Dendritic cell treated with granulocyte-macrophage colony-stimulating factor and Interleukin-4, amounts not matched to agents 40 ng/mL and 50 ng/mL, for 4 days (primary cell): ENCODE measurements at regions of chr3 and their contacts with region 1.

Region 1: GRCh38 chr3:115092220-115092791 is 54.8 kb downstream of the ZBTB20 start:
- H3K4me3 Mint-ChIP-seq: no peak overlapping the region
- H3K27ac Mint-ChIP-seq: no peak overlapping the region
- H3K4me1 Mint-ChIP-seq: peaks cover 2% of the 10 kb centered on the region
- H3K27me3 Mint-ChIP-seq: no peaks in the 10 kb centered on the region

Region 2: DNA sequence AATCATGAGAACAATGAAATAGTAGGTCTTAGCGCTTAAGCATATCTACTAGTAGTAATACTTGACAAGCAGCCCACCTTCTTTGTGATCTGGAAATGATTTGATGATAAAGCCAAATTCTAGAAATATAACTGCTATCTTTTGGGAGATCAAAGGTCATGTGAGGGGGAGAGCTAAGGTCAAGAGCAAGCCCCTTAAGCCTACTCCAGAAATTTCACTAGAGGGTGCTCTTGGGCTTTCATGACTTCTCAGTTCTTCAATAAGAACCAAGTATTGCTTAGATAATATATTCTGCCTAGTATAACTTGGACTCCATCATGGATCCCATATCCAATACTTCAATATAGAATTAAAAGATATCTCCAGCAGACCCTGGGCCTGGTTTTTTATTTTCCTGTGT is 264.8 kb before region 1 on chr3:
- intact Hi-C with region 1: loop called (anchors 2 kb)
- H3K4me3 Mint-ChIP-seq: no peak overlapping the region
- H3K27ac Mint-ChIP-seq: no peak overlapping the region
- H3K4me1 Mint-ChIP-seq: no peaks in the 10 kb centered on the region
- H3K27me3 Mint-ChIP-seq: no peaks in the 10 kb centered on the region

Region 3: GRCh38 chr3:115052906-115053305 is 39.4 kb before region 1 on chr3:
- intact Hi-C with region 1: no loop called
- H3K4me3 Mint-ChIP-seq: no peak overlapping the region
- H3K27ac Mint-ChIP-seq: no peak overlapping the region
- H3K4me1 Mint-ChIP-seq: no peaks in the 10 kb centered on the region
- H3K27me3 Mint-ChIP-seq: no peaks in the 10 kb centered on the region

Region 4: DNA sequence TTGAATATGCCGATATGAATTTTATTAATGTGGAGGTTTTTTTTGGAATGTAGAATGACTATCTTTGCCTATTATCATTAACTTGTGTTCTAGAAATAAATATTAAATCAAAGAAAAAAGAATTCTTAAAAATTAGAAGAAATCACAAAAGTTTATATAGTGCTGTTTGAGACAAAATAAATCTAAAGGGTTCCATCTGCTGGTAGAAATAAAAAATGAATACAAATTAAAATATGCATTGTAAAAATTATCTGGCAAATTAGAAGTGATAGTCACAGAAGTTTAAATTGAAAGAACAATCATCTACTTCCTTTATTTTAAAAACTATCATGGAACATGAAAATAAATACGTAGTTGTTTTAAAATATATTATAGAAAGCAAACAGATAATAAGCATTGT is 77.5 kb after region 1 on chr3:
- intact Hi-C with region 1: loop called (anchors 2 kb)
- H3K4me3 Mint-ChIP-seq: no peak overlapping the region
- H3K27ac Mint-ChIP-seq: no peak overlapping the region
- H3K4me1 Mint-ChIP-seq: no peaks in the 10 kb centered on the region
- H3K27me3 Mint-ChIP-seq: no peaks in the 10 kb centered on the region

Region 5: DNA sequence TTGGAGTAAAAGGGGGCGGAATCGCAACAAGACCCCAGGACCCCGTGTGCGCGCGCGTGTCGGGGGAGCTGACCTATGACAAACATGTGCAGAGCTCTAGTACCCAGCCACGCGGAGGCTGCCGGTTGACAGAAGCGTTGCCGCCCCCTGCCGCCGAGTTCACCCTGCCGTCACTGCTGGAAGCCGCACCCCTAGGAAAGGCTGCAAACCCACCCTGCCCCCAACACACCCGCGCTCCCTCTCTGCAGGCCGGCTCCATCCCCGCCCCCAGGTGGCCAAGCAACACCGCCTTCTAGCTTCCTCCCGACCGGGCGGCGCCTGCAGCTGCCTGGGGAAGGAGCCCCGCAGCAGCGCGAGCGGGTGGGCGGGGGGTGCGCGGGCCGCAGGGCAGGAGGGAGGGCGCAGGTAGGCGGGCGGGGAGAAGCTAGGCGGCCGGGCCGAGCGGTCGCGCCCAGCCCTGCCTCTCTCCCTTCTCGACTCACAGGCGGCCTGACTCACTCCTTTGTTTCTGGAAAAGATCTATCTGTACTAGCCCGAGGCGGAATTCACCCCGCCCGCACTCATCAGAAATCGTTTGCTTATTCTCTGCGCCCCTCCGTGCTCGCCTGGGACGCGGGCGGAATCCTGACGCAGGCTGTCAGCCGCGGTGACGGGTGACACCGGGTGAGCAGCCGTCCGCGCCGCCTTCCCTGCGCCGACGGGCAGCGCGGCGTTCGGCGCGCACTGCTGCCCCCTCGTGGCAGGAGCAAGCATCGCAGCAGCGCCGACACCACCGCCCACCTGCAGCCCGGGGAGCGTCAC is 691.8 kb after region 1 on chr3:
- intact Hi-C with region 1: loop called (anchors 10 kb)
- H3K4me3 Mint-ChIP-seq: peak overlapping the region; percentile 88
- H3K27ac Mint-ChIP-seq: peak overlapping the region; percentile 45
- H3K4me1 Mint-ChIP-seq: peaks cover 12% of the 10 kb centered on the region
- H3K27me3 Mint-ChIP-seq: peaks cover 30% of the 10 kb centered on the region